Heart right ventricle (tissue), 16 donors: ENCODE measurements at regions of chr16 and their contacts with region 1.

Region 1: GRCh38 chr16:78249068-78249467 is 149.6 kb downstream of the WWOX start:
- DNase-seq: peak; percentile 11 to 35
- ATAC-seq: peak in 3 of 8 donors; percentile 25 to 88 (median 46)
- H3K4me3 ChIP-seq: no peak overlapping the region
- H3K27ac ChIP-seq: no peak overlapping the region
- H3K4me1 ChIP-seq: no peaks in the 10 kb centered on the region
- H3K27me3 ChIP-seq: no peaks in the 10 kb centered on the region
- CTCF ChIP-seq: peak in 3 of 9 donors; percentile 20 to 38 (median 23)

Region 2: GRCh38 chr16:78458588-78458987 is 209.5 kb after region 1 on chr16:
- intact Hi-C with region 1: loop called in 1 of 10 experiments (anchors 10 kb)
- DNase-seq: no peak
- ATAC-seq: no peak
- H3K4me3 ChIP-seq: no peak overlapping the region
- H3K27ac ChIP-seq: no peak overlapping the region
- H3K4me1 ChIP-seq: no peaks in the 10 kb centered on the region
- H3K27me3 ChIP-seq: peaks cover 0 to 3% (median 0%) of the 10 kb centered on the region in 7 donors
- CTCF ChIP-seq: no peak

Region 3: DNA sequence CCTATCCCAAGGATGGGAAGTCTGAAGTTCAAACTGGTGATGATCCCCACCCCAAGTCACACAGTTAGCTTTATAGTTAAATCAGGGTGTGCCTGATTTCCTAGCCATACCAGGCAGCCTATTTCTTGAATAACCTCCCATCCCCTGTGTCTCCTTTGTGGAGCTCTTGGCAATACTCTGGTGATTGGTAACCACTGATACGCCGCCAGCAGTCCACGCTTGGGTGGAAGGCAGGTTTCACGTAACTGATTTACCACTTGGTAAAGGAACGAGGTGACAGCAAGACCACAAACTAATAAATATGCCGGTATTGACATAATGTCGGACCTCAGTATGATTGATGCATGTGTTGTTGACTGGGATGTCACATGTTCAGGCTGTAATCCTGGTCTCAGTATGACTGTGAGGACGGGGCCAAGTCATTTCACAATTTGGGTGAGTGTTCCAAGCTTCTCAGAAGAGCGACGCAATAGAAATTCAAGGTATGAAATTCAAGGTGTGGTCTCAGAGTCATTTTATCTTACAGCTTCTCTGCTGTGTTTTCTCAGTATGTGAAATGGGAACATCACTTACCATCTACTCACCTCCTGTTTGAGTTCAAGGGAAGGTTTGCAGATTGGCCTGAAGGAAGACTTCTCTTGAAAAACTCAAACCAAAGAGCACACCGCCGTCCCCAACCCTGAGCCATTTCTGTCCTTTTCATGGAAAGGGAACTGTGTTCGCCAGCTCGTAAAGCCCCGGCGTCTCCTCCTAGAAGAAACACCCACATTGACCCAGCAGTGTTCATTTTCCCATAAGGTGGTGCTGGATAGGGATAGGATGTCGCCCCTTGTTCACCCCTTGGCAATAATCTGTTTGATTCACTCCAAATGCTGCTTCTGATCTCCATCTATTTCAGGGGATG is 529.3 kb after region 1 on chr16:
- intact Hi-C with region 1: loop called in 1 of 10 experiments (anchors 5 kb)
- DNase-seq: no peak
- ATAC-seq: no peak
- H3K4me3 ChIP-seq: no peak overlapping the region
- H3K27ac ChIP-seq: no peak overlapping the region
- H3K4me1 ChIP-seq: peaks cover 0 to 6% (median 0%) of the 10 kb centered on the region in 9 donors
- H3K27me3 ChIP-seq: no peaks in the 10 kb centered on the region
- CTCF ChIP-seq: no peak